Posterior vena cava (tissue), 2 donors: ENCODE measurements at regions of chrX and their contacts with region 1.

Region 1: GRCh38 chrX:4150259-4150658 is 436.8 kb upstream of the PRKX start:
- DNase-seq: no peak

Region 2: GRCh38 chrX:3990569-3990968 is 159.7 kb before region 1 on chrX:
- intact Hi-C with region 1: no loop called
- DNase-seq: no peak

Region 3: DNA sequence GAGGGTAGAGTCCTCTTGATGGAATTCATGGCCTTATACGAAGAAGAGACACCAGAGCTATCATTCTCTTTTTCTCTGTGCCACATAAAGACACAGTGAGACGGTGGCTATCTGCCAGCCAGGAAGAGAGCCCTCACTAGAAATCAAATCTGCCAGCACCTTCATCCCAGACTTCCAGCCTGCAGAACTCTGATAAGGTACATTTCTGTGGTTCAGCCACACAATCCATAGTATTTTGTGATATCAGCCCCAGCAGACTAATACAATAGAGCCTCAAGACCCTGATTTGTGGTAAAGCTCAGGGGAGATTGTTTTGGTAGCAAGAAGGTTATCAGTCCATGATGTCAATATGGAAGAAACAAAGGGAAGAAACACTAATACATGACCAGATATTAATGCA is 865.2 kb after region 1 on chrX:
- intact Hi-C with region 1: loop called in 1 of 2 experiments (anchors 10 kb)
- DNase-seq: no peak